Heart left ventricle (tissue), 16 donors: ENCODE measurements at regions of chr3 and their contacts with region 1.

Region 1: GRCh38 chr3:70358978-70359580 is 46.6 kb upstream of the MDFIC2 start:
- DNase-seq: no peak
- ATAC-seq: no peak
- H3K4me3 ChIP-seq: no peak overlapping the region
- H3K27ac ChIP-seq: no peak overlapping the region
- H3K4me1 ChIP-seq: no peaks in the 10 kb centered on the region
- H3K27me3 ChIP-seq: no peaks in the 10 kb centered on the region
- CTCF ChIP-seq: peak; percentile 38 to 69 (median 54)
- POLR2A ChIP-seq: no peak

Region 2: DNA sequence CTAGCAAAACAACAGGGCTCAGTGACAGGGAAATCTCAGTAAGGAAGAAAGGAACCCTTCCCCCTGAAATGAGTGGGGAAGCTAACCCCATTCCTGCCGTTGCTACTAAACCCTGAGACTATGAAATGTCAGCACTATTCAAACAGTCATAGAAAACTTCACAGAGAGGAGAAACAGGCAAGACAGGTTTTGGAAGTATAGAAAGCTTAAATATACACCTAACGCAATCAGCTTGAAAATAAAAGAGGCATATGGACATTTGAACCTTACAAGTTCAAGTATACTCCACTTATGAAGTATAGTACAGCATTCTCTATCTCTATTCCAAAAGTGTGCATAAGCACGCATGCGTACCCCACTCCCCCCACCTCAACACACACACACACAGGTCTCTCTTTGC is 955.6 kb before region 1 on chr3:
- intact Hi-C with region 1: no loop called
- DNase-seq: no peak
- ATAC-seq: no peak
- H3K4me3 ChIP-seq: no peak overlapping the region
- H3K27ac ChIP-seq: no peak overlapping the region
- H3K4me1 ChIP-seq: peaks cover 0 to 25% (median 9%) of the 10 kb centered on the region in 12 donors
- H3K27me3 ChIP-seq: no peaks in the 10 kb centered on the region
- CTCF ChIP-seq: no peak
- POLR2A ChIP-seq: no peak

Region 3: DNA sequence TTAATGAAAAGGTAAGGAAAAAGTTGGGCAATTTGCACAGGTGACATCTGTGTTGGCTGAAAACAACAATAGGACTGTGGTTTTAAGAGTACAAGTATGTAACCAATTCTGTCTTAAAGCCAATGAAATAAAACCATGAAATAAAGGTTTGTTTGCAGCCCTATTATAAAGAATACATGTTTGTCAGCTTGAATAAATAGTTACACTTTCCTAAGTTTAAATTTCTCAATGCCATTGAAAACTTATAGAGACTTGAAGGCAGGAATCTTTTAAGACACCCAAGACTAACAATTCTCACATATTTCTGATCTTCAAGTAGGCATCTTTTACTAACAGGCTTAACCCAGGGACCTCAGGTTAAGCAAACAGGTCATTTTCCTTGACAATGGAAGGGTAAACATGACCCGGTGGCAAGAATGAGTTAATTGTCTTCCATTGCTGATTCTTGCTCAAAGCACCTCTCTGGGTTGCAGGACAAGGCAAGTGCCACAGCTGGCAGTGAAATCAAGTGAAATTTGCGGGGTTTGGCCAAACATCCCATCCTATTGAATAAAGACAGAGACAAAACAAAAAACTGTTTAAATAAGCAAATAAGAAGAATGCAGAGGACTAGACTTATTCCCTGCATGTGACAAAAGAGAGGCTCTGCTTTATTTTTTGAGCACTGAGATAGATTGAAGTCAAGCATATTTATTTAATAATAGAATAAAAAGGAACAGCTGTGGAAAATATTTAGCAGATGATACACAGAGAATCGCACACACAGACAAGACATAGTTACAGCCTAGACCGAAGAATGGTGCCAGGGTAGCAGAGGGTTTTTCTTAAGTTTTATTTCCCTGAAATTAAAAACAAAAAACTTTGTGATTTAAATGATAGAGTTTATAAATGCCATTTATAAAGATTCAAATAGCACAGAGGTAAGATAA is 675.9 kb before region 1 on chr3:
- intact Hi-C with region 1: loop called in 1 of 10 experiments (anchors 10 kb)
- DNase-seq: no peak
- ATAC-seq: no peak
- H3K4me3 ChIP-seq: no peak overlapping the region
- H3K27ac ChIP-seq: no peak overlapping the region
- H3K4me1 ChIP-seq: peaks cover 0 to 10% (median 0%) of the 10 kb centered on the region in 12 donors
- H3K27me3 ChIP-seq: no peaks in the 10 kb centered on the region
- CTCF ChIP-seq: no peak
- POLR2A ChIP-seq: no peak

Region 4: GRCh38 chr3:69986419-69986818 is 372.7 kb before region 1 on chr3:
- intact Hi-C with region 1: no loop called
- DNase-seq: no peak
- ATAC-seq: no peak
- H3K4me3 ChIP-seq: no peak overlapping the region
- H3K27ac ChIP-seq: no peak overlapping the region
- H3K4me1 ChIP-seq: no peaks in the 10 kb centered on the region
- H3K27me3 ChIP-seq: no peaks in the 10 kb centered on the region
- CTCF ChIP-seq: no peak
- POLR2A ChIP-seq: no peak

Region 5: GRCh38 chr3:70064194-70064779 is 294.8 kb before region 1 on chr3:
- intact Hi-C with region 1: loop called (anchors 2 to 10 kb)
- DNase-seq: peak in 1 of 5 donors; percentile 10
- ATAC-seq: no peak
- H3K4me3 ChIP-seq: no peak overlapping the region
- H3K27ac ChIP-seq: no peak overlapping the region
- H3K4me1 ChIP-seq: peaks cover 0 to 10% (median 1%) of the 10 kb centered on the region in 12 donors
- H3K27me3 ChIP-seq: peaks cover 0 to 9% (median 0%) of the 10 kb centered on the region in 9 donors
- CTCF ChIP-seq: peak; percentile 46 to 76 (median 60)
- POLR2A ChIP-seq: no peak

Region 6: GRCh38 chr3:70090322-70090913 is 268.7 kb before region 1 on chr3:
- intact Hi-C with region 1: loop called in 3 of 10 experiments (anchors 2 to 10 kb)
- DNase-seq: no peak
- ATAC-seq: no peak
- H3K4me3 ChIP-seq: no peak overlapping the region
- H3K27ac ChIP-seq: no peak overlapping the region
- H3K4me1 ChIP-seq: no peaks in the 10 kb centered on the region
- H3K27me3 ChIP-seq: peaks cover 0 to 7% (median 0%) of the 10 kb centered on the region in 9 donors
- CTCF ChIP-seq: peak; percentile 45 to 74 (median 62)
- POLR2A ChIP-seq: no peak

Region 7: GRCh38 chr3:70308760-70309159 is 50.3 kb before region 1 on chr3:
- intact Hi-C with region 1: loop called in 1 of 10 experiments (anchors 5 kb)
- DNase-seq: no peak
- ATAC-seq: no peak
- H3K4me3 ChIP-seq: no peak overlapping the region
- H3K27ac ChIP-seq: no peak overlapping the region
- H3K4me1 ChIP-seq: no peaks in the 10 kb centered on the region
- H3K27me3 ChIP-seq: peaks cover 0 to 3% (median 0%) of the 10 kb centered on the region in 9 donors
- CTCF ChIP-seq: peak in 2 of 12 donors; percentile 14 to 27
- POLR2A ChIP-seq: no peak